Activated naive CD4-positive, alpha-beta T cell treated with anti-CD3 and anti-CD28 coated beads, Interleukin-2, amount 10 ng/mL, durations not matched to agents 7 days and 5 days (primary cell): ENCODE measurements at regions of chr3 and their contacts with region 1.

Region 1: DNA sequence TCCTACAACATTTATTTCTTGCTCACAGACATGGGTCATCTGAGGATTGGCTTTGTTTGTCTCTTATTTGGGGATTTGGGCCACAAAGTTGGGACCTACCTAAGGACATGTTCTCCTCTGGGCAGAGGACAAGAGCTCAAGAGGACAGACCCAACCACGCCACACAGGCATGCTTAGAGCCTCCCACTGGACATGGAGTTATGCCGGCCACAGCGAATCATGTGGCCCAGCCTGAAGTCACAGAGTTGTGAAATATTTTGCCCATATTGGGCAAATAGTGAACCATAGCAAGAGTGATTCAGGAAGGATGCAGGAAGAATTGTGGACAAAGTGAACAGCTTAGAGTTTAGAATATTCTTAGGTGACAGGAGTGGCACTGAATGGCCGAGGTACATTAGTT is 9.9 kb downstream of the TRAK1 start:
- DNase-seq: no peak
- H3K4me3 Mint-ChIP-seq: no peak overlapping the region
- H3K27ac Mint-ChIP-seq: no peak overlapping the region
- H3K4me1 Mint-ChIP-seq: no peaks in the 10 kb centered on the region
- H3K27me3 Mint-ChIP-seq: no peaks in the 10 kb centered on the region

Region 2: GRCh38 chr3:41893977-41894376 is 207.1 kb before region 1 on chr3:
- CTCF ChIA-PET with region 1: interaction called, 24 read pairs
- DNase-seq: peak; percentile 21
- H3K4me3 Mint-ChIP-seq: no peak overlapping the region
- H3K27ac Mint-ChIP-seq: no peak overlapping the region
- H3K4me1 Mint-ChIP-seq: no peaks in the 10 kb centered on the region
- H3K27me3 Mint-ChIP-seq: no peaks in the 10 kb centered on the region

Region 3: DNA sequence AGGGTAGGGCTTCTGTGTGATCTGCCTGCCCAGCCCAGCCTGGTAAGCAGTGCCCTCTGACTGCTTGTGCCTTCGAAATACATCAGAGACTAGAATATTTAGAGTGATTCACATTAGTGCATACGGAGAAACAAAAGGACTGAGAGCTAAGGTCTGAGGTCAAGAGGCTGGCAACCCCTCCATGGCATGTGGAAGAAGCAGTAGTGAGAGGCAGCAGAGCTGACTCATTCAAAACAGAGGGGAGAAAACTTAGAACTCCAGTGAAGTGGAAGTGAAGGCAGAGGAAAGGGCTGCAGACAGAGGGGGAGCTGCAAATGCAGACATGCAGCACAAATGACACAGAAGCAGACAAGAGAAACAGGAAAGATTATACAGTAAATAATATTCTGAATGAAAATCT is 200.8 kb before region 1 on chr3:
- CTCF ChIA-PET with region 1: interaction called, 24 read pairs
- DNase-seq: no peak
- H3K4me3 Mint-ChIP-seq: no peak overlapping the region
- H3K27ac Mint-ChIP-seq: peak overlapping the region; percentile 79
- H3K4me1 Mint-ChIP-seq: no peaks in the 10 kb centered on the region
- H3K27me3 Mint-ChIP-seq: no peaks in the 10 kb centered on the region

Region 4: DNA sequence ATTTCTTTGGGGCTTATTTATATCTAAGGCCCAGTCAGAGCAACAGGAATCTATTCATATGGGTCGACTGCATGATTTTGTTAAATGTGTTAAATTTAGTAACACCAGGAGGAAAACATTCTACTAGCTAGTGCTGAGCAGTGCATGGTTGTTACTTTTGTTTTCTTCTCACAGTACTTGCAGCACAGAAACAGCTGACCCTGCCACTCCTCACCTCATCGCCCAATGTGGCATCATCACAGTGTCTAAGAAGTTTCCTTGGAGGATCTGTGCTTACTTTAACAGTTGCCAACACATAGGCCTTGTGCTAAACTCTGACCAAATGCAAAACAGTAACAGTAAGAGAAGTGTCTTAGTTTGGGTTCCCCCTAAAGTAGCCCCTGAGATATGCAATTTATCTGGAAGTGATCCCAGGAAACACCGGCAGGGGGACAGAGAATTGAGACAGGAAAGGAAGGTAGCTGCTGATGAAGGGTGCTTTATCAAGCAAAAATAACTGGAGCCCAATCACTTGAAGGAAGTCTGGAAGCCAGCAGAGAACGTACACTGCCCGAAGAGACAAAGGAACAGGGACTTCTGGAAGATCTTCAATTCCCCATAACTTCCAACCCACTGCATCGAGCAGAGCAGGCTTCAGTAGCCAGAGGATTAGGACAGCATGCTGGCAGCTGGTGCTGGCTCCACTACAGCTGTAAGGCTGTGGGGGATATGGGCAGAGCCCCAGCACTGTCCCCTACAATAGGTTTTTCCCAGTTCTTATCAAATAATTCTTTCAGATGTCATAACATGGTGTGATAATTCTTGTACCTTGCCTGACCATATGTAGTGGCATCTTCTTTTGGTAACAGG is 103.1 kb before region 1 on chr3:
- CTCF ChIA-PET with region 1: interaction called, 10 read pairs
- DNase-seq: no peak
- H3K4me3 Mint-ChIP-seq: no peak overlapping the region
- H3K27ac Mint-ChIP-seq: no peak overlapping the region
- H3K4me1 Mint-ChIP-seq: peaks cover 3% of the 10 kb centered on the region
- H3K27me3 Mint-ChIP-seq: peaks cover 20% of the 10 kb centered on the region

Region 5: DNA sequence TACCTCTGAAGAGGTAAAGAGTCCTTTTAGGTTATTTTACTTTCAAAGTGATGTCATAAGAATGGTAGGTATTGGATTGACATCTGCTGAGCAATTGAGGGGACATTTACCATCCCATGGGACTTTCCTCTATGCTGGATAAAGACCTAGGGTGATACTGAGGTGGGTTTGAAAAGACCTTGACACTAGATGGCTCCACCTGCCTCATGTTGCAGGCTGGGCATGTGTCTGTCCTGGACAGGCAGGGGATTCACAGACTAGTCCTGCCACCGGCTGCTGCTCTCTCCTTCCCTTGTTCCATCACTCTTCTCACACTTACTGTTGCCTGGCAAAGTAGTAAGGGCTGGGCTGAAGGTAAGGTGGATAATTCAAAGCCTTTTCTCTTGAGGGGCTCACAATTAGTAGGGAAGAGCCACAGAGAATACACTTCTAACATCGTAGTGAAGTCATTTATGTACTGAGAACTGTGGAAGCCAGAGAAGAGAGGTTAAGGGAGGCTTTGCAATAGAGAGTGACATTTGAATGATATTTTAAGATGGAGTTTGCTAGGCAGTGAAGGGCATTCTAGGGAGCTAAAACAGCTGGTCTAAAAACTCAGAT is 17.8 kb after region 1 on chr3:
- CTCF ChIA-PET with region 1: interaction called, 23 read pairs
- DNase-seq: peak; percentile 51
- H3K4me3 Mint-ChIP-seq: no peak overlapping the region
- H3K27ac Mint-ChIP-seq: no peak overlapping the region
- H3K4me1 Mint-ChIP-seq: peaks cover 18% of the 10 kb centered on the region
- H3K27me3 Mint-ChIP-seq: no peaks in the 10 kb centered on the region